ENCODE measurements at regions of chr15 and their contacts with region 1.

Region 1: DNA sequence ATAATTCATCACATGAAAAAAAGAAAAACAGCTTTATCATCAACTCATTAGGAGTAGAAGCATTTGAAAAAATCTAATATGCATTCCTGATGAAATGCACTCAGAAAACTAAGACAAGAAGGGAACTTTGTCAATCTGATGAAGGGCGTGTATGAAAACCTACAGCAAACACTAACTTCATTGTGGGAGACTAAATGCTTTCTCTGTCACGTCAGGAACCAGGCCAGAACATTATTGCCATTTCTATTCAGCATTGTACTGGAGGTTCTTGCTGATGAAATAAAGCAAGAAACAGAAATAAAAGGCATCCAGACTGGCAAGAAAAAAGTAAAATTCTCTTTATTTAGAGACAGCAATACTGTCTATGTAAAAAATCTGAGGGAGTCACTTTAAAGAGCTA is 235.2 kb downstream of the GABRB3 start:
- H3K4me3 Mint-ChIP-seq: no peak overlapping the region
- H3K27ac Mint-ChIP-seq: no peak overlapping the region
- H3K4me1 Mint-ChIP-seq: no peaks in the 10 kb centered on the region
- H3K27me3 Mint-ChIP-seq: no peaks in the 10 kb centered on the region

Region 2: DNA sequence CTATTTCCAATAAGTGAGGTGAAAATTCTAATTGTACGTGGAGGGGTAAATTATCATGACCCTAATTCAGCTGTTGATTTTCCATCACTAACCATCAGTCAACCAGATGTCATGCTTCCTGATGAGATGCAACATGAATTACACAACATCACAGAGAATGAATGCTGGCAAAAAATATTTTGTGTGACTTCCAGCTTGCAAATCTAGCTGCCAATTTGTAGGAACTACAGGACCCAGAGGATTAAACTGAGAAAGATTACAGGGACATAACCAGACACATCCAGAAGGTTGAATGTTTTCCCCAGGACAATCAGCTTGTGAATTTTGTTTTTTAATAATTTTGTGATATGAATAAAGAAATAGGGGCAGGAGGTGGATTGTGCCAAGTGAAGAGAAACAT is 325.6 kb before region 1 on chr15:
- intact Hi-C with region 1: no loop called
- H3K4me3 Mint-ChIP-seq: no peak overlapping the region
- H3K27ac Mint-ChIP-seq: no peak overlapping the region
- H3K4me1 Mint-ChIP-seq: no peaks in the 10 kb centered on the region
- H3K27me3 Mint-ChIP-seq: no peaks in the 10 kb centered on the region

Region 3: DNA sequence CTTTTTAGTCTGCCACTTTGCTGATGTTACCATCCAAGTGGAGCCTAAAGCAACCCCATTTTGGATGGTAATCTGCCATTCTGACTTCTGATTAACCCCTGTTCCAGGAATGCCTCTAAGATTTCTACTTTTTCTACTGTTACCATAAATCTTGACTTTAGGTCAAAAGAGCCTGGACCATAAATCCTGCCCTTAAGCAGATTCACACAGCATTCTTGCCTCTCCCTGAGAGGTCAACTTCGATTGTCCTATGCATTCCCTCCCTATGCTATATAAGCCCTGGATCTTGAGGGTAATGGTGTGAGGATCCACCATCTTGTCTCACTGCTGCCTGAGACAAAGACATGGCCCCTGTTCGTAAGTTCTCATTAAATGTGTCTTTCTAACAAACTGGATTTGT is 57.9 kb after region 1 on chr15:
- intact Hi-C with region 1: loop called (anchors 10 kb)
- H3K4me3 Mint-ChIP-seq: no peak overlapping the region
- H3K27ac Mint-ChIP-seq: no peak overlapping the region
- H3K4me1 Mint-ChIP-seq: no peaks in the 10 kb centered on the region
- H3K27me3 Mint-ChIP-seq: no peaks in the 10 kb centered on the region